ENCODE measurements at regions of chr4 and their contacts with region 1.

Region 1: GRCh38 chr4:64539234-64539849 is 130.1 kb upstream of the TECRL start:
- DNase-seq: peak; percentile 13
- ATAC-seq: peak; percentile 95
- H3K4me3 ChIP-seq: no peak overlapping the region
- H3K27ac ChIP-seq: no peak overlapping the region
- H3K4me1 ChIP-seq: no peaks in the 10 kb centered on the region
- H3K27me3 ChIP-seq: no peaks in the 10 kb centered on the region
- CTCF ChIP-seq: peak; percentile 68 to 84 (median 73)
- EP300 ChIP-seq: no peak
- POLR2A ChIP-seq: no peak
- RAD21 ChIP-seq: peak; percentile 92

Region 2: GRCh38 chr4:63302792-63303191 is 1236.5 kb before region 1 on chr4:
- CTCF ChIA-PET with region 1: interaction called, 7 read pairs
- POLR2A ChIA-PET with region 1: no interaction called
- RAD21 ChIA-PET with region 1: interaction called, 3 read pairs
- SMC1A ChIA-PET with region 1: interaction called, 3 read pairs
- in situ Hi-C with region 1: no loop called
- intact Hi-C with region 1: loop called (anchors 10 kb)
- DNase-seq: no peak
- ATAC-seq: no peak
- H3K4me3 ChIP-seq: no peak overlapping the region
- H3K27ac ChIP-seq: no peak overlapping the region
- H3K4me1 ChIP-seq: no peaks in the 10 kb centered on the region
- H3K27me3 ChIP-seq: no peaks in the 10 kb centered on the region
- CTCF ChIP-seq: no peak
- EP300 ChIP-seq: no peak
- POLR2A ChIP-seq: no peak
- RAD21 ChIP-seq: no peak

Region 3: GRCh38 chr4:63528256-63528991 is 1010.9 kb before region 1 on chr4:
- CTCF ChIA-PET with region 1: interaction called, 3 read pairs
- POLR2A ChIA-PET with region 1: no interaction called
- RAD21 ChIA-PET with region 1: no interaction called
- SMC1A ChIA-PET with region 1: no interaction called
- in situ Hi-C with region 1: no loop called
- intact Hi-C with region 1: loop called (anchors 2 kb)
- DNase-seq: no peak
- ATAC-seq: 0 out of 3 replicates have a peak, but pooled peaks have one; percentile 31
- H3K4me3 ChIP-seq: no peak overlapping the region
- H3K27ac ChIP-seq: no peak overlapping the region
- H3K4me1 ChIP-seq: no peaks in the 10 kb centered on the region
- H3K27me3 ChIP-seq: no peaks in the 10 kb centered on the region
- CTCF ChIP-seq: no peak; a peak in 1 of 6 replicates
- EP300 ChIP-seq: no peak
- POLR2A ChIP-seq: no peak
- RAD21 ChIP-seq: peak; percentile 39; the same call in 1 of the 2 replicates

Region 4: GRCh38 chr4:63965875-63966274 is 573.5 kb before region 1 on chr4:
- CTCF ChIA-PET with region 1: no interaction called
- POLR2A ChIA-PET with region 1: no interaction called
- RAD21 ChIA-PET with region 1: no interaction called
- SMC1A ChIA-PET with region 1: no interaction called
- in situ Hi-C with region 1: no loop called
- intact Hi-C with region 1: loop called (anchors 10 kb)
- DNase-seq: no peak
- ATAC-seq: no peak
- H3K4me3 ChIP-seq: no peak overlapping the region
- H3K27ac ChIP-seq: no peak overlapping the region
- H3K4me1 ChIP-seq: no peaks in the 10 kb centered on the region
- H3K27me3 ChIP-seq: no peaks in the 10 kb centered on the region
- CTCF ChIP-seq: no peak
- EP300 ChIP-seq: no peak
- POLR2A ChIP-seq: no peak
- RAD21 ChIP-seq: no peak

Region 5: DNA sequence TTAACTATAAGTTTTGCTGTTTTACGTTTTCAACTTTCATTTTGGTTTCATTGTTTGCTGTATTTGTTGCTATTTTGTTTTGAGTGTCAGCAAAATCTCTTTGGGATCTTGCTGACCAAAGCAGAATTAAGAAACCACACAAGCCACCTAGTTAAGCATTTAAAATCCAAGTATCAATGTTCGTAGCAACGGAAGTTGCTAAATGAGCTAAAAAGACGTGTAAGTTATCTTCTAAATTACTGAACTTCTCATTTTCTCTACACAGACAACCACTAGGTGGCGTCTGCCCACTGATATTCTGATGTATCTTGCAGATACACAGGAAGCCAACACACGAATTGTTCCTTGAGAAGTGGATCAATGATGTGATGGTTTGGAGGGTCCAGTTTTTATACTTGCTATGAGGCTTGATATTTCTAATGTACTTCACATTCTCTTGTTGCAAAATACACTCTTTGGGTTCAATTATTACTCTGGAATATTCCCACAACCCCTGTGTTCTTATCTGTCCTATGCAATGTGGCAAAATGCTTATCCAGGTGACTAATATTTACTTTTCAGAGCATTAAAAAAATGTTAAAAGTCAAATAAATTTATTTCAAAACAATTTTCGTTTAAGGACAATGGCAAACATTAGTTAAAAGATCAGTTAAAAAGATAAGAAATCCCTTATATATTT is 380.6 kb before region 1 on chr4:
- CTCF ChIA-PET with region 1: interaction called, 30 read pairs
- POLR2A ChIA-PET with region 1: no interaction called
- RAD21 ChIA-PET with region 1: interaction called, 14 read pairs
- SMC1A ChIA-PET with region 1: interaction called, 8 read pairs
- in situ Hi-C with region 1: loop called (anchors 5 kb)
- intact Hi-C with region 1: loop called (anchors 1 kb)
- DNase-seq: peak; percentile 19
- ATAC-seq: peak; percentile 88
- H3K4me3 ChIP-seq: no peak overlapping the region
- H3K27ac ChIP-seq: no peak overlapping the region
- H3K4me1 ChIP-seq: no peaks in the 10 kb centered on the region
- H3K27me3 ChIP-seq: no peaks in the 10 kb centered on the region
- CTCF ChIP-seq: peak; percentile 75 to 81 (median 77)
- EP300 ChIP-seq: no peak
- POLR2A ChIP-seq: no peak
- RAD21 ChIP-seq: peak; percentile 77

Region 6: GRCh38 chr4:64166365-64166764 is 373.0 kb before region 1 on chr4:
- CTCF ChIA-PET with region 1: interaction called, 22 read pairs
- POLR2A ChIA-PET with region 1: no interaction called
- RAD21 ChIA-PET with region 1: no interaction called
- SMC1A ChIA-PET with region 1: interaction called, 4 read pairs
- in situ Hi-C with region 1: no loop called
- intact Hi-C with region 1: no loop called
- DNase-seq: no peak
- ATAC-seq: no peak
- H3K4me3 ChIP-seq: no peak overlapping the region
- H3K27ac ChIP-seq: no peak overlapping the region
- H3K4me1 ChIP-seq: no peaks in the 10 kb centered on the region
- H3K27me3 ChIP-seq: no peaks in the 10 kb centered on the region
- CTCF ChIP-seq: no peak
- EP300 ChIP-seq: no peak
- POLR2A ChIP-seq: no peak
- RAD21 ChIP-seq: no peak

Region 7: GRCh38 chr4:64305565-64306254 is 233.6 kb before region 1 on chr4:
- CTCF ChIA-PET with region 1: no interaction called
- POLR2A ChIA-PET with region 1: no interaction called
- RAD21 ChIA-PET with region 1: no interaction called
- SMC1A ChIA-PET with region 1: no interaction called
- in situ Hi-C with region 1: no loop called
- intact Hi-C with region 1: loop called (anchors 5 kb)
- DNase-seq: peak; percentile 9
- ATAC-seq: peak; percentile 87
- H3K4me3 ChIP-seq: no peak overlapping the region
- H3K27ac ChIP-seq: no peak overlapping the region
- H3K4me1 ChIP-seq: no peaks in the 10 kb centered on the region
- H3K27me3 ChIP-seq: no peaks in the 10 kb centered on the region
- CTCF ChIP-seq: no peak
- EP300 ChIP-seq: no peak
- POLR2A ChIP-seq: no peak
- RAD21 ChIP-seq: no peak

Region 8: DNA sequence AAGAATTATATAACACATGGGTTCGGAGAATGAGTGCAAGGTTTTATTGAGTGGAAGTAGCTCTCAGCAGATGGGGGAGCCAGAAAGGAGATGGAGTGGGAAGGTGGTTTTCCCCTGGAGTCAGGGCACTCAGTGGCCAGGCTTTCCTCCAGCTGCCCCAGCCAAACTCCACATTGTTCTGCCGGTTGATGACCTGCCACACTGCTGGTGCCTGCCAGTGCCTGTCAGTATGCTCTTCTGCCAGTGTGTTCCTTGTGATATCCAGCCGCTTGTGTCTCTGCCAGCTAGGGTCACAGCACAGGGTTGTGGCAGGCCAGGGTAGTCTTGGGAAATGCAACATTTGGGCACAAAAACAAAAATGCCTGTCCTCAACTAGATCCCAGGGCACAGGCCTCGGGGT is 474.7 kb after region 1 on chr4:
- CTCF ChIA-PET with region 1: no interaction called
- POLR2A ChIA-PET with region 1: no interaction called
- RAD21 ChIA-PET with region 1: no interaction called
- SMC1A ChIA-PET with region 1: no interaction called
- in situ Hi-C with region 1: no loop called
- intact Hi-C with region 1: no loop called
- DNase-seq: no peak
- ATAC-seq: no peak
- H3K4me3 ChIP-seq: no peak overlapping the region
- H3K27ac ChIP-seq: no peak overlapping the region
- H3K4me1 ChIP-seq: no peaks in the 10 kb centered on the region
- H3K27me3 ChIP-seq: no peaks in the 10 kb centered on the region
- CTCF ChIP-seq: no peak
- EP300 ChIP-seq: no peak
- POLR2A ChIP-seq: no peak
- RAD21 ChIP-seq: no peak

Measured in GM12878 (cell line).